Activated naive CD4-positive, alpha-beta T cell treated with anti-CD3 and anti-CD28 coated beads for 36 hours (primary cell): ENCODE measurements at regions of chr12 and their contacts with region 1.

Region 1: GRCh38 chr12:91703491-91704283 is 442.0 kb downstream of the BTG1 start:
- DNase-seq: no peak
- H3K4me3 Mint-ChIP-seq: no peak overlapping the region
- H3K27ac Mint-ChIP-seq: no peak overlapping the region
- H3K4me1 Mint-ChIP-seq: no peaks in the 10 kb centered on the region
- H3K27me3 Mint-ChIP-seq: no peaks in the 10 kb centered on the region

Region 2: DNA sequence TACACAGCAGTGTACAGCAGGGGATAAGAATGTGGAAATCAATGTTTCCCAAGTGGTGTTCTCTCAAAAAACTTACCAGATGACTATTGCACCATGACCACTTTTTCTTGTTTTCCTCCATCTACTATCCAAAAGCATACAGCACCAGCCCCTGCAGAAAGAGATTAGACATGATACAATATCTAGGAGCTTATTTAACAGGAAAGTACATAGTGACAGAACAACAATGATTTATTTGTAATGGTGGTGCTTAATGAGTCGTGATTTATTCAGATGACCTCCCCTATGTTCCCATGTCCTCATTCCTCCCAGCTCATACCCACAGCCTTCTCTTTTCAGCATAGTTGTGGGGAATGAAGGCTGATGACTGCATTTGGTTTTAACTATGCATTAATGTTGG is 28.4 kb after region 1 on chr12:
- CTCF ChIA-PET with region 1: no interaction called
- intact Hi-C with region 1: loop called (anchors 2 kb)
- DNase-seq: no peak
- H3K4me3 Mint-ChIP-seq: no peak overlapping the region
- H3K27ac Mint-ChIP-seq: no peak overlapping the region
- H3K4me1 Mint-ChIP-seq: peaks cover 2% of the 10 kb centered on the region
- H3K27me3 Mint-ChIP-seq: no peaks in the 10 kb centered on the region

Region 3: GRCh38 chr12:91846466-91847055 is 142.9 kb after region 1 on chr12:
- CTCF ChIA-PET with region 1: no interaction called
- intact Hi-C with region 1: no loop called
- DNase-seq: no peak
- H3K4me3 Mint-ChIP-seq: no peak overlapping the region
- H3K27ac Mint-ChIP-seq: no peak overlapping the region
- H3K4me1 Mint-ChIP-seq: peaks cover 12% of the 10 kb centered on the region
- H3K27me3 Mint-ChIP-seq: no peaks in the 10 kb centered on the region